Naive thymus-derived CD4-positive, alpha-beta T cell (primary cell): ENCODE measurements at regions of chr13 and their contacts with region 1.

Region 1: DNA sequence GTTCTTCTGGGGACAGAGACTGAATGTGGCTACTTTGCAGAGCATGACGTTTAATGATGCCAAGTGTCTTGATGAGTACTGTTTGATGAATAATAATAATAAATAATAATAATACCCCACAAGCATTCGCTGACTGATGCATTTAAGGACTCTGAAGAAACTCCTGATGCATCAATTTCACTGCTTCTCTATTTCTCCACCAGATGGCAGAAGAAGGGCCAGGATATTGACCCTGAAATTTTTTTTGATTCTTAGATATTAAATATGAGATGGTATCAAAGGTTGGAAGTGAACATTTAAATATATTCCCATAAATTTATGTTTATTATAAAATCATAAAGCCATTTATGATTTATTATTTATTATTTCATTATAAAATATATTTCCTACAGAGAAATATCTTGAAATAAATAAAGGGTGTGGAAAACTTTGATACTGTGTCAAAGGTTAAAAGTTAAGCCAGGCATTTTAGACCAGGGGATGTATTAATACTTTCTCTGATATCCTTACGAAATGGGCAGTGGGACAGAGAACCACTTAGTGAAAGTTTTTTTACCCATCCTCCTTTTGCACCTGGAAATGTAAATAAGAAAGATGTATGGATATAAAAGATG is 170.9 kb downstream of the LACC1 start:
- DNase-seq: peak in 5 of 9 donors; percentile 25 to 50 (median 34)
- ATAC-seq: no peak
- H3K4me3 ChIP-seq: no peak overlapping the region
- H3K4me3 Mint-ChIP-seq: no peak overlapping the region
- H3K27ac ChIP-seq: no peak overlapping the region
- H3K27ac Mint-ChIP-seq: no peak overlapping the region
- H3K4me1 ChIP-seq: no peaks in the 10 kb centered on the region
- H3K4me1 Mint-ChIP-seq: peaks cover 0 to 4% (median 2%) of the 10 kb centered on the region in 7 donors
- H3K27me3 ChIP-seq: no peaks in the 10 kb centered on the region
- H3K27me3 Mint-ChIP-seq: peaks cover 32 to 53% (median 44%) of the 10 kb centered on the region in 5 donors

Region 2: DNA sequence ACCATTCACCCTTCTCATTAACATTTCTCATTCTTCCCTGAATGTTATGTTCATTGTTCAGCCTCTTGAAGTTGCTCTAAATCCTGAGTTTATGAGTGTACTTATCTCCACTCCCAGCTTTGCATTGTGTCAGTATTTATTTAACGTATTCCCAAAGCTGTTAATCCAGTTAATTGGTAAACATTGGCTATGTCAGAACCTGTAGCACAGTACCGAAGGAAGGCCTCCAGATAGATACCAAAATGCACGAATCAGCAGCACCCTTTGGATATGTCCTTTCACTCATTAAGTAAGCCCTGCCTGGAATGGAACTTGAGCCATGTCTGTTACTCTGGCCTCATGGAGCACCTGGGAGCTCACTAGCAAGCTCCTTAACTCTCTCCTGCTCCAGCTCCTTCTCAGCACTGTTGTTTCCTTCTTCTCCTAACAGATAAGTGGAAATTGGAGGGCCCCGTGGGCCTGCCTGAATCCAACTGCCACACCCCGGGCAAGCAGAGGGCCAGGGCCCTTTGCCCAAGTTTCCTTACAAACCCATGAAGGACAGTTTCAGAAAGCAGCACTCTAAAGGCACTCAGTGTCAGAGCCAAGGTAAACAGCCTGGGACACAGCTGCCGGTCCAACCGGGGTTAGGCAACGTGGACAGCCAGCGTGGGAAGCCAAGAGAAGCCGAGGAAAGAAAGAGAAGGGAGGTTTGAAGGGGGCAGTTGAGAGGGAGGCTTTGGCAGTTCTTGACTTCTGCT is 168.1 kb after region 1 on chr13:
- CTCF ChIA-PET with region 1: no interaction called
- POLR2A ChIA-PET with region 1: no interaction called
- intact Hi-C with region 1: no loop called
- DNase-seq: no peak
- ATAC-seq: no peak
- H3K4me3 ChIP-seq: no peak overlapping the region
- H3K4me3 Mint-ChIP-seq: no peak overlapping the region
- H3K27ac ChIP-seq: no peak overlapping the region
- H3K27ac Mint-ChIP-seq: no peak overlapping the region
- H3K4me1 ChIP-seq: no peaks in the 10 kb centered on the region
- H3K4me1 Mint-ChIP-seq: no peaks in the 10 kb centered on the region
- H3K27me3 ChIP-seq: no peaks in the 10 kb centered on the region
- H3K27me3 Mint-ChIP-seq: peaks cover 0 to 13% (median 6%) of the 10 kb centered on the region in 5 donors

Region 3: GRCh38 chr13:44470638-44471562 is 420.3 kb after region 1 on chr13:
- CTCF ChIA-PET with region 1: interaction called, 3 read pairs
- POLR2A ChIA-PET with region 1: no interaction called
- intact Hi-C with region 1: loop called in 1 of 2 experiments (anchors 1 kb)
- DNase-seq: peak in 5 of 9 donors; percentile 10 to 29 (median 21)
- ATAC-seq: no peak
- H3K4me3 ChIP-seq: no peak overlapping the region
- H3K4me3 Mint-ChIP-seq: no peak overlapping the region
- H3K27ac ChIP-seq: no peak overlapping the region
- H3K27ac Mint-ChIP-seq: no peak overlapping the region
- H3K4me1 ChIP-seq: no peaks in the 10 kb centered on the region
- H3K4me1 Mint-ChIP-seq: peaks cover 0 to 5% (median 0%) of the 10 kb centered on the region in 7 donors
- H3K27me3 ChIP-seq: no peaks in the 10 kb centered on the region
- H3K27me3 Mint-ChIP-seq: peaks cover 0 to 23% (median 0%) of the 10 kb centered on the region in 5 donors